Right cardiac atrium (tissue), 5 donors: ENCODE measurements at regions of chr16 and their contacts with region 1.

Region 1: GRCh38 chr16:3364774-3365427 is 9.2 kb downstream of the OR2C1 start:
- DNase-seq: peak; percentile 93 to 95 (median 93)
- ATAC-seq: peak; percentile 98 to 99
- H3K4me3 ChIP-seq: peak overlapping the region; percentile 73
- H3K27ac ChIP-seq: peak overlapping the region; percentile 89
- H3K4me1 ChIP-seq: peaks cover 1% of the 10 kb centered on the region
- H3K27me3 ChIP-seq: no peaks in the 10 kb centered on the region

Region 2: DNA sequence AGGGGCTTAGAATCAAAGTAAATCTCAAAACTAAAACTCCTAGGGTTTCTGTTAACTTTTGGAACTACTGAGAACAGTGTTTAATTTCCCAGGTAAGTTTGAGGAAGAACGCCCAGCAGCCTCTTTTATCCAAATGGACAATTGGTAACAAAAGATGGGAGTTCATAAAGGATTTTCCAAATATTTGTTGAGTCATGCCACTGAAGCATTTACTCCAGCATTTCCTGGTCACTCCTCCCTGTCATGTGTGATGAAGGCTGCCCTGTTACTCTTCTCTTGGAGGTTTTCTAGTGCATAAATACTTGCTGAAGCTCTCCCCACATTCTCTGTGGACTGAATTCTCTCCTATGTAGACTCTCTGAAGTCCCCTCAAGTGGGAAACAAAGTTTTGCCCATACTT is 43.1 kb before region 1 on chr16:
- intact Hi-C with region 1: loop called in 1 of 4 experiments (anchors 2 kb)
- DNase-seq: no peak
- ATAC-seq: no peak
- H3K4me3 ChIP-seq: no peak overlapping the region
- H3K27ac ChIP-seq: no peak overlapping the region
- H3K4me1 ChIP-seq: no peaks in the 10 kb centered on the region
- H3K27me3 ChIP-seq: no peaks in the 10 kb centered on the region

Region 3: DNA sequence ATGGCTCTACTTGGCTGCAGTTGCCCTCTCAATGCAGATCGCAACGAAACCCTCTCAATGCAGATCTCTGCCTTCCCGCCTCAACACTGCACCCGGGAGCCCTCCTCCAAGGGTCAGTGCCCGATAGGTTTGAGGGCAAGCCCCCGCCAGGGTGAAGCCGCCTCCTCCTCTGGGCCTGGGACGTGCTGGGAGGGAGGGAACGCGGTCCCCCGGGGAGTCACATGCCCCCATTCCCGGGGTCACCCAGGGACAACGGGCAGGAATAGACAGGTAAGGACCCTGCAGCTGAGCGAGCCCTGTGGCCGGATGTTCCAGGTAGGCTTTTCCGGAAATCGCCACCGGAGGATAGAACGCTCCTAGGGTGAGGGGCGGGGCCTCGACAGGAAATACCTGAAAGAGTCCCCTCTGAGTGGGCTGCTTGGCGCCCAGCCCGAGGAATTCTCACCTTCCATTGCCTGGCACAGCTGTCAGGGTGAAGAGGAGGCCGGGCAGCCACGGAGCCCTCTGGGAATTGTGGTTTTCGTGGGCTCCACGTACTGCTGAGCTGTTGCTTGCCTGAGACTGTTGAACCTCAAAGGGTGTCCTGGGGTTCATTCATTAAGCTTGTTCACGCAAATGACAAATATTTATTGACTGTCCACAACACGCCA is 49.0 kb after region 1 on chr16:
- intact Hi-C with region 1: no loop called
- DNase-seq: no peak
- ATAC-seq: no peak
- H3K4me3 ChIP-seq: no peak overlapping the region
- H3K27ac ChIP-seq: no peak overlapping the region
- H3K4me1 ChIP-seq: no peaks in the 10 kb centered on the region
- H3K27me3 ChIP-seq: no peaks in the 10 kb centered on the region